Left cardiac atrium (tissue), 4 donors: ENCODE measurements at regions of chr12 and their contacts with region 1.

Region 1: DNA sequence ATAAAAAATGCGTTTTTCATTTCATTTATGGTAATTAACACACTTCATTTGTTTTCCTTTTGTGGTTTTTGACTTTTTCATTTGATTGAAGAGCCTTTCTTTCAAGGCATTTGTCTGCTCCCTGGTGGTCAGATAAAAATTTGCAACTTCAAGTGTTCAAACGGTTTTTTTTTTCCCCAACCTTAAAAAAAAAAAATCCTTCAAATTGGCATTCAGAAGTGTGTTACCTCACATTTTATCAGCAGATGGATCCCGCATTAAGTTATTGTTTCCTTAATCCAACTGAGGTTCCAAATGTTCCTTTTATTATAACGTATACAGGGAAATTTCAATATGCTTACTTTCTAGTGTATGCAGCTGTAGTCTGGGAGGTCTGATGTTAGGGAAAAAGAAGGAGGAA is 47.2 kb downstream of the MYF5 start:
- DNase-seq: no peak
- ATAC-seq: no peak

Region 2: GRCh38 chr12:80412369-80412953 is 351.4 kb before region 1 on chr12:
- intact Hi-C with region 1: loop called in 1 of 2 experiments (anchors 5 kb)
- DNase-seq: no peak
- ATAC-seq: peak in 1 of 2 donors; percentile 74

Region 3: GRCh38 chr12:80472902-80473500 is 290.9 kb before region 1 on chr12:
- intact Hi-C with region 1: loop called (anchors 5 to 10 kb)
- DNase-seq: no peak
- ATAC-seq: peak in 1 of 2 donors; percentile 38